Activated CD4-positive, alpha-beta T cell treated with anti-CD3 and anti-CD28 coated beads for 36 hours (primary cell): ENCODE measurements at regions of chr15 and their contacts with region 1.

Region 1: GRCh38 chr15:86488046-86488445 is 408.4 kb downstream of the AGBL1 start:
- DNase-seq: no peak
- ATAC-seq: no peak
- H3K4me3 Mint-ChIP-seq: no peak overlapping the region
- H3K27ac Mint-ChIP-seq: no peak overlapping the region
- H3K4me1 Mint-ChIP-seq: peaks cover 3% of the 10 kb centered on the region
- H3K27me3 Mint-ChIP-seq: no peaks in the 10 kb centered on the region

Region 2: DNA sequence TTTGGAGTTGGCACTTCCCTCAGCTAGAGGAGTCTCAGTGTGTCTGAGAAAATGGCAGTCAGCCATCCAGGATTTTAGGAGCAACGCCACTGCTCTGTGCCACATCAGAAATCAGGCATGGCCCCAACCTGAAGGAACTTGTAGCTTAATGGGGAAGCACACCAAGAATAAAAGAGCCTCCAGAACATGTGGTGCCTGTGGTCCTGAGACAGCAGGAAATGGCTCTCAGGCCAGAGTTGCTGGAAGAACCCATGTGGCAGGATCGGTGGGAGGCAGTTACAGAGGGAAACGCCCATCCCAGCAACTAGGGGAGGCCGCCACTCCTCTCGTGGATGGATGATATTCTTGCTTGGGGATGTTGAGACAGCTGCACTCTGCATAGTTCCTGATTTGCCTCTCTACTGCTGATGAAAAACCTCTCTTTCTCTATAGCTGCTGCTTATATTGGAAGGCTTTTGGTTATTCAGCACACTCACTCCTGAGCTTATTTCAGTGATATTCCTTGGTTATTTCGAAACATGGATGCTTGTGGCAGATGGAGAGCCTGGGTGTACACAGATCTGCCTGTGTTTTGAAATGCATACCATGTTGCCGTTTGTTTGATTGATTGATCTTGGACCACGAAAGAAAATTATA is 745.7 kb before region 1 on chr15:
- CTCF ChIA-PET with region 1: no interaction called
- POLR2A ChIA-PET with region 1: no interaction called
- intact Hi-C with region 1: no loop called
- DNase-seq: no peak
- ATAC-seq: no peak
- H3K4me3 Mint-ChIP-seq: no peak overlapping the region
- H3K27ac Mint-ChIP-seq: peak overlapping the region; percentile 40
- H3K4me1 Mint-ChIP-seq: no peaks in the 10 kb centered on the region
- H3K27me3 Mint-ChIP-seq: no peaks in the 10 kb centered on the region

Region 3: DNA sequence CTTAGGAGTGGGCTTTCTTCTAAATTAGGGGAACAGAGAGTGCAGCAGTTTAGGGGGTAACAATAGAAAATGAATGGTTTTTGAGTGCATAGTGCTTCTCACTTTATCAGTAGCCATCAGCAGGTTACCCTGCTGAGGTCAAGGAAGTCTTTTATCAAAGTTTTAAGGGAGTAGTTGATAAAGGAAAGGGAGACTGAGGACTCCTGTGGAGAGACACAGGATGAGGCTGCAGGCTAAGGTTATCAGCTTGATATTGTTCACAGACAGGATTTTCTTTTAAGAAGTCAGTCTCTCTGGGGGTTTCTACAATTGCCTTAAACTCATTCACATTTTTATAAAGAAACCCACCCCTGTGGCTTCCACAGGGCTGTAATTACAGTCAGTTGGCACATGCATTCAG is 203.4 kb before region 1 on chr15:
- CTCF ChIA-PET with region 1: no interaction called
- POLR2A ChIA-PET with region 1: interaction called, 13 read pairs
- intact Hi-C with region 1: no loop called
- DNase-seq: no peak
- ATAC-seq: no peak
- H3K4me3 Mint-ChIP-seq: no peak overlapping the region
- H3K27ac Mint-ChIP-seq: no peak overlapping the region
- H3K4me1 Mint-ChIP-seq: no peaks in the 10 kb centered on the region
- H3K27me3 Mint-ChIP-seq: peaks cover 2% of the 10 kb centered on the region